T-cell (primary cell): ENCODE measurements at regions of chr1 and their contacts with region 1.

Region 1: GRCh38 chr1:116794804-116795481 is 40.7 kb downstream of the CD2 start:
- DNase-seq: no peak
- ATAC-seq: no peak
- H3K4me3 ChIP-seq: no peak overlapping the region
- H3K4me3 Mint-ChIP-seq: no peak overlapping the region
- H3K27ac ChIP-seq: no peak overlapping the region
- H3K27ac Mint-ChIP-seq: peak overlapping the region; percentile 23 to 31
- H3K4me1 ChIP-seq: peaks cover 12 to 36% of the 10 kb centered on the region in 2 experiments
- H3K4me1 Mint-ChIP-seq: peaks cover 48 to 70% (median 66%) of the 10 kb centered on the region in 3 donors
- H3K27me3 ChIP-seq: no peaks in the 10 kb centered on the region
- H3K27me3 Mint-ChIP-seq: no peaks in the 10 kb centered on the region

Region 2: DNA sequence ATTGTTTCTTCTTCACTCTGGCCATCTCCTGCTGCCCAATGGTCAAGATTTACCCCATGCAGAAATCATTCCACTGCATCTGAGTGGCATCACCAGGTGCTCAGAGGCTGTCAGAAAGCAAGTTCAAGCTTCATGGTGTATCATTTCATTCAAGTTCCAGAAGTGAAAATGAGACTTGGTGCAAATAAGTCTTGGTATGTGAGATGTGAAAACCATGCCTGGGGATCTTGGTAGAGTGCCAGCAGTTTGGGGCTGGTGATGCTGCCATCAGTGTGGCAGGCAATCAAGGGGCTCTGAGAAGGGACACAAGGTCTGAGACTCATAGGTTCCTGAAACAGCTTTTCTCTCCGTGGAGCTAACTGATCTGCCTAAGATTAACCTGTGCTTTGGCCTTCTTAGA is 11.3 kb after region 1 on chr1:
- CTCF ChIA-PET with region 1: interaction called in 1 of 2 experiments, 7 read pairs
- POLR2A ChIA-PET with region 1: interaction called in 1 of 2 experiments, 26 read pairs
- DNase-seq: peak in 33 of 35 experiments; percentile 19 to 78 (median 43)
- ATAC-seq: peak; percentile 15 to 49 (median 29)
- H3K4me3 ChIP-seq: peak overlapping the region in 1 of 2 donors; percentile 22
- H3K4me3 Mint-ChIP-seq: peak overlapping the region; percentile 61 to 72 (median 64)
- H3K27ac ChIP-seq: peak overlapping the region; percentile 87
- H3K27ac Mint-ChIP-seq: peak overlapping the region; percentile 95 to 99
- H3K4me1 ChIP-seq: peaks cover 8 to 71% of the 10 kb centered on the region in 2 experiments
- H3K4me1 Mint-ChIP-seq: peaks cover 72 to 92% (median 91%) of the 10 kb centered on the region in 3 donors
- H3K27me3 ChIP-seq: no peaks in the 10 kb centered on the region
- H3K27me3 Mint-ChIP-seq: no peaks in the 10 kb centered on the region